CD4-positive, alpha-beta memory T cell (primary cell): ENCODE measurements at regions of chr19 and their contacts with region 1.

Region 1: GRCh38 chr19:52853880-52854279 is 3.5 kb downstream of the ZNF468 start:
- DNase-seq: no peak
- H3K4me3 ChIP-seq: no peak overlapping the region
- H3K4me3 Mint-ChIP-seq: peak overlapping the region in 2 of 8 donors; percentile 9 to 53
- H3K27ac ChIP-seq: no peak overlapping the region
- H3K27ac Mint-ChIP-seq: no peak overlapping the region
- H3K4me1 ChIP-seq: peaks cover 4% of the 10 kb centered on the region
- H3K4me1 Mint-ChIP-seq: peaks cover 12 to 42% (median 19%) of the 10 kb centered on the region in 4 donors
- H3K27me3 ChIP-seq: no peaks in the 10 kb centered on the region
- H3K27me3 Mint-ChIP-seq: no peaks in the 10 kb centered on the region

Region 2: DNA sequence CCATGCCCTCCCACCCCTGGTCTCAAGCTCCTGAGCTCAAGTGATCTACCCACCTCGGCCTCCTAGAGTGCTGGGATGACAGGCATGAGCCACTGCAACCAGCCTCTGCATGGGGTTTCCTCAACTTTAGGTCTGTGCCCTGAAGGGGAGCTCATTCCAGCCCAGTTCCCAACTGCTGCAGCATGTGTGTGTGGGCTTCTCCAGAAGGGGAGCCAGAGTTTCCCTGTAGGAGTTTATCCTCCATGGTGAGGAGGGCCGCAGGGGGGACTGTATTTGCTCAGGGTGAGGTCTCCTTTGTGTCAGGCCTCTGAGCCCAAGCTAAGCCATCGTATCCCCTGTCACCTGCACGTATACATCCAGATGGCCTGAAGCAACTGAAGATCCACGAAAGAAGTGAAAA is 337.7 kb before region 1 on chr19:
- CTCF ChIA-PET with region 1: no interaction called
- POLR2A ChIA-PET with region 1: no interaction called
- intact Hi-C with region 1: loop called (anchors 5 kb)
- DNase-seq: no peak
- H3K4me3 ChIP-seq: no peak overlapping the region
- H3K4me3 Mint-ChIP-seq: no peak overlapping the region
- H3K27ac ChIP-seq: no peak overlapping the region
- H3K27ac Mint-ChIP-seq: no peak overlapping the region
- H3K4me1 ChIP-seq: no peaks in the 10 kb centered on the region
- H3K4me1 Mint-ChIP-seq: peaks cover 0 to 2% (median under 1%) of the 10 kb centered on the region in 4 donors
- H3K27me3 ChIP-seq: no peaks in the 10 kb centered on the region
- H3K27me3 Mint-ChIP-seq: peaks cover 4 to 7% of the 10 kb centered on the region in 2 donors

Region 3: GRCh38 chr19:52897144-52897935 is 43.5 kb after region 1 on chr19 and contains the start of gene ZNF320:
- CTCF ChIA-PET with region 1: no interaction called
- POLR2A ChIA-PET with region 1: interaction called, 3 read pairs
- intact Hi-C with region 1: loop called (anchors 1 kb)
- DNase-seq: peak; percentile 88 to 92 (median 89)
- H3K4me3 ChIP-seq: peak within 1 kb of the TSS; percentile 77 to 95
- H3K4me3 Mint-ChIP-seq: peak within 1 kb of the TSS; percentile 90 to 96 (median 94)
- H3K27ac ChIP-seq: peak within 1 kb of the TSS; percentile 69
- H3K27ac Mint-ChIP-seq: peak within 1 kb of the TSS; percentile 83 to 97 (median 94)
- H3K4me1 ChIP-seq: peaks cover 14% of the 10 kb centered on the region
- H3K4me1 Mint-ChIP-seq: peaks cover 3 to 24% (median 22%) of the 10 kb centered on the region in 4 donors
- H3K27me3 ChIP-seq: no peaks in the 10 kb centered on the region
- H3K27me3 Mint-ChIP-seq: no peaks in the 10 kb centered on the region
- total RNA-seq, gene ZNF320: 14.1 to 15.6 TPM

Region 4: GRCh38 chr19:52942386-52943133 is 88.7 kb after region 1 on chr19:
- CTCF ChIA-PET with region 1: no interaction called
- POLR2A ChIA-PET with region 1: no interaction called
- intact Hi-C with region 1: loop called (anchors 2 kb)
- DNase-seq: peak; percentile 95 to 98 (median 97)
- H3K4me3 ChIP-seq: peak overlapping the region; percentile 68 to 84
- H3K4me3 Mint-ChIP-seq: peak overlapping the region; percentile 88 to 98 (median 96)
- H3K27ac ChIP-seq: peak overlapping the region; percentile 72
- H3K27ac Mint-ChIP-seq: peak overlapping the region; percentile 91 to 98 (median 95)
- H3K4me1 ChIP-seq: peaks cover 17% of the 10 kb centered on the region
- H3K4me1 Mint-ChIP-seq: peaks cover 10 to 32% (median 24%) of the 10 kb centered on the region in 4 donors
- H3K27me3 ChIP-seq: no peaks in the 10 kb centered on the region
- H3K27me3 Mint-ChIP-seq: no peaks in the 10 kb centered on the region